Transverse colon (tissue), 4 donors: ENCODE measurements at regions of chr22 and their contacts with region 1.

Region 1: DNA sequence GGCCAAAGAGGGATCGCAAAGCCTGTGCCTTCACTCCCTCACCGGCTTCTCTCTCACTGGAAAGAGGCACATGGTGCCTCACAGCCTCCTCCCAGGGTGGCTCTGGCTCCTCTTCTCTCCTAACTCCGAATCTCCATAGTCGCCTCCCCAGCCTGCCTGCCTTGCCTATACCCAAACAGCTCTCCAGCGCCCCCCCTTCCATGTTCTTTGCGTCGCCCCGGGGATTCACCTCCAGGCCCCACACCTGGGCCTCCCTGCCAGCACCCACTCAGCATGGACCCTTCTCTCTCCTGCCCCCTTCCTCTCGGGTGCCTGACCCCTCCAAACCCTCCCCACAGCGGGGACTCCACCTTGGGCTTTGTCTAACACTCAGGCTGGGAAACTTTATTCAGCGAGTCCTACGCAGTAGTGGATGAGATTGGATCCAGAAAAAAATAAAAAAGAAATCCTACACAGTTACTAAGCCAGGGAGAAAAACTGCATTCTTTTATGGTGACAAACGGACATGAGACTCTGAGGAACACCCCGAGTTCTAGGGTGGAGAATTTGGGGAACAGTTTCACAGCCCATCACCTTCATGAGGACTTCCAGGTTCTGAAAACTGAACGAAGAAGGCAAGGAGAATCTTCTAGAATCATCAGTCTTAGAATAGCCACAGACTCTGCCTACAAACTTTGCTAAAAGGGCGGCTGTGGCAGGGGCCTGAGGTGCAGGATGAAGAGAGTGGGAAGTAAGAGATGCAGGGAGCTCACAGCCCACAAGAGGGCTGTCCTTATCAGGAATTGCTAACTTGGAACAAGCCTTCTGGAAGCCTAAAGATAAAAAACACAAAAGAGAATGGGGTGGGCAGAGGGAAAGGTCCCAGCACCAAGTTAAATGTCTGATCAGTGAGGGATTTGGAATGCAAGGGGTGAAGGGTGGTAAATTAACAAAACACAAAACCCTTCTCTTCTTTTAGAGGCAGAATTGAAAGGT is 5.3 kb downstream of the PPM1F start:
- DNase-seq: no peak
- H3K4me3 ChIP-seq: no peak overlapping the region
- H3K27ac ChIP-seq: peak overlapping the region; percentile 33 to 61 (median 54)
- H3K4me1 ChIP-seq: peaks cover 12 to 41% (median 19%) of the 10 kb centered on the region in 4 donors
- H3K27me3 ChIP-seq: no peaks in the 10 kb centered on the region
- CTCF ChIP-seq: peak in 4 of 5 experiments; percentile 25 to 29 (median 27)
- EP300 ChIP-seq: no peak
- POLR2A ChIP-seq: no peak

Region 2: DNA sequence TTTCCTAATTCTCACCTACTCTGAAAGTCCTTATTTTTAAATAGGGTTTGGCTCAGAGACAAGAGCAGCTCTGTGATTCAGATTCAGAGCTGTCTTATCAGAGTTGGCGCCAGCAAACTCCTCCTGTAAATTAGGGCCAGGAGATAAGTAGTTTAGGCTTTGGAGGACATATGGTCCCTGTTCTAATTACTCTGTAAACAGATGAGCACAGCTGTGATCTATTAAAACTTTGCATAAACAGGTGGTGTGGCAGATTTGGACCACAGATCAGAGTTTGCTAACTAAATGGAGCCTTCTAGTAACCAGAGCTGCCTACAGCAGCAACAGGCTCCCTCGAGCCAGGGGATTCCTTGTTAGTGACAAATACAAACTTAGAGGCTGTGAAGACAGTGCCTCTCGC is 239.7 kb before region 1 on chr22:
- in situ Hi-C with region 1: loop called in 2 of 4 experiments (anchors 10 to 25 kb)
- intact Hi-C with region 1: loop called (anchors 5 kb)
- DNase-seq: no peak
- H3K4me3 ChIP-seq: no peak overlapping the region
- H3K27ac ChIP-seq: no peak overlapping the region
- H3K4me1 ChIP-seq: peaks cover 0 to 11% (median 0%) of the 10 kb centered on the region in 4 donors
- H3K27me3 ChIP-seq: no peaks in the 10 kb centered on the region
- CTCF ChIP-seq: no peak
- EP300 ChIP-seq: no peak
- POLR2A ChIP-seq: no peak